Activated CD4-positive, alpha-beta memory T cell treated with anti-CD3 and anti-CD28 coated beads for 36 hours (primary cell): ENCODE measurements at regions of chr2 and their contacts with region 1.

Region 1: DNA sequence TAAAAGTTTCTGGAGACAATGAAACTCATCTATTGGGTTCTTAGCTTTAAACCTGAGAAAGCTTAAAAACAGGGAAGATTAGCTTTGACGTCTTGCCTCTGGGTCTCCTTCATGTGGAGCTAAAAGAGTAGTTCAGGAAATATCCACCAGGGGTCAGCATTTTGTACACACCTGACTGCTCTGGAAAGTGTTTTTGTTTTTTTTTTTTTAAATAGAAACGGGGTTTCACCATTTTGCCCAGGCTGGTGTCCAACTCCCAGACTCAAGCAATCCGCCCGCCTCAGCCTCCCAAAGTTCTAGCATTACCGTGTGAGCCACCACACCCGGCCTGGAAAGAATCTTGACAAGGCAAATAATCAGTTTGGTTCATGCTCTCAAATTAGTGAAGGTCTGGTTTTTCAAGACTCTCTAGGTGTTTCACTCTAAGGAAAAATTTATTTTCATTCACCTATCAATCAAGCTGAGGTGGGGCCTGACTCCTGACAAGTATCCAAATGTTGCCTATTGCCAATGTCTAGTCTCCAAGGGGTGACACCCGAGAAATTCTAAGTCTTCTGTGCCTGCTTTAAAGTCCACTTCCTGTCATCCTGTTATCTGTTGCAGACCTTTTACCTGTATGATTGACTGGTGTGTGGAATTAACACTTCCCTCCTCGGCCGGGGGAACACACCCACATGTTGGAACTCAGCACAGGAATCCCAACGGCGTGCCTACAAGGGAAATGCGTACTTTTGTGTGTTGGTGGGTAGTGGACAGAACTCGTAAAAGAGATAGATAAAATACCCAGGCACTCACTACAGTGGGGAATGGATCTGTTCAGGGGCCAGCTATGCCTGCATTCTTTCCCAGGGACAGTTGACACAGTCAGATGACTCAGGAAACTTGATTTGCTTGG is 11.3 kb downstream of the IL1RN start:
- DNase-seq: peak; percentile 38
- H3K4me3 Mint-ChIP-seq: peak overlapping the region; percentile 23
- H3K27ac Mint-ChIP-seq: peak overlapping the region; percentile 15
- H3K4me1 Mint-ChIP-seq: peaks cover 24% of the 10 kb centered on the region
- H3K27me3 Mint-ChIP-seq: no peaks in the 10 kb centered on the region

Region 2: GRCh38 chr2:112454586-112454985 is 684.1 kb before region 1 on chr2:
- CTCF ChIA-PET with region 1: no interaction called
- POLR2A ChIA-PET with region 1: no interaction called
- intact Hi-C with region 1: no loop called
- DNase-seq: no peak
- H3K4me3 Mint-ChIP-seq: no peak overlapping the region
- H3K27ac Mint-ChIP-seq: no peak overlapping the region
- H3K4me1 Mint-ChIP-seq: no peaks in the 10 kb centered on the region
- H3K27me3 Mint-ChIP-seq: no peaks in the 10 kb centered on the region

Region 3: DNA sequence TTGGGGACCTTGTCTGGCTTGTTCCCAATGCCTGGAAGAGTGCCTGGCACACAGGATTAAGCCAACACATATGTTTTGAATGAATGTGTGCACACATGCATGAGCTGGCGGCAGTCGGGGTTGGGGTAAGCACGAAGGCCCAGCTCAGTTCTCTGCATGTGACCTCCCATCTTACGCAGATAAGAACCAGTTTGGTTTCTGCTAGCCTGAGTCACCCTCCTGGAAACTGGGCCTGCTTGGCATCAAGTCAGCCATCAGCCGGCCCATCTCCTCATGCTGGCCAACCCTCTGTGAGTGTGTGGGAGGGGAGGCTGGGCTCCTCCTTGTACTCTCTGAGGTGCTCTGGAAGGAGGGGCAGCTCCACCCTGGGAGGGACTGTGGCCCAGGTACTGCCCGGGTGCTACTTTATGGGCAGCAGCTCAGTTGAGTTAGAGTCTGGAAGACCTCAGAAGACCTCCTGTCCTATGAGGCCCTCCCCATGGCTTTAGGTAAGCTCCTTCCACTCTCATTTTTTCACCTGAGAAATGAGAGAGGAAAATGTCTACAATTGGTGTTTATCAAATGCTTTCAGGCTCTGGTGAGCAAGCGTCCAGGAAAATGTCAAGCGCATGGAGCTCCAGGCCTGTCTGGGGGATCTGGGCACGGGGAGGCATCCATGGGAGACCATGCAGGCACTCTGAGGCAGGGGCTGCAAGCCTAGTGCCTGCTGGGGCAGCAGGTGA is 21.0 kb before region 1 on chr2:
- CTCF ChIA-PET with region 1: interaction called, 58 read pairs
- POLR2A ChIA-PET with region 1: no interaction called
- intact Hi-C with region 1: loop called (anchors 2 kb)
- DNase-seq: peak; percentile 84
- H3K4me3 Mint-ChIP-seq: peak overlapping the region; percentile 13
- H3K27ac Mint-ChIP-seq: peak overlapping the region; percentile 68
- H3K4me1 Mint-ChIP-seq: peaks cover 23% of the 10 kb centered on the region
- H3K27me3 Mint-ChIP-seq: peaks cover 3% of the 10 kb centered on the region

Region 4: GRCh38 chr2:113157118-113157896 is 18.6 kb after region 1 on chr2:
- CTCF ChIA-PET with region 1: interaction called, 69 read pairs
- POLR2A ChIA-PET with region 1: interaction called, 5 read pairs
- intact Hi-C with region 1: loop called (anchors 2 kb)
- DNase-seq: peak; percentile 66
- H3K4me3 Mint-ChIP-seq: peak overlapping the region; percentile 81
- H3K27ac Mint-ChIP-seq: peak overlapping the region; percentile 79
- H3K4me1 Mint-ChIP-seq: peaks cover 22% of the 10 kb centered on the region
- H3K27me3 Mint-ChIP-seq: no peaks in the 10 kb centered on the region

Region 5: DNA sequence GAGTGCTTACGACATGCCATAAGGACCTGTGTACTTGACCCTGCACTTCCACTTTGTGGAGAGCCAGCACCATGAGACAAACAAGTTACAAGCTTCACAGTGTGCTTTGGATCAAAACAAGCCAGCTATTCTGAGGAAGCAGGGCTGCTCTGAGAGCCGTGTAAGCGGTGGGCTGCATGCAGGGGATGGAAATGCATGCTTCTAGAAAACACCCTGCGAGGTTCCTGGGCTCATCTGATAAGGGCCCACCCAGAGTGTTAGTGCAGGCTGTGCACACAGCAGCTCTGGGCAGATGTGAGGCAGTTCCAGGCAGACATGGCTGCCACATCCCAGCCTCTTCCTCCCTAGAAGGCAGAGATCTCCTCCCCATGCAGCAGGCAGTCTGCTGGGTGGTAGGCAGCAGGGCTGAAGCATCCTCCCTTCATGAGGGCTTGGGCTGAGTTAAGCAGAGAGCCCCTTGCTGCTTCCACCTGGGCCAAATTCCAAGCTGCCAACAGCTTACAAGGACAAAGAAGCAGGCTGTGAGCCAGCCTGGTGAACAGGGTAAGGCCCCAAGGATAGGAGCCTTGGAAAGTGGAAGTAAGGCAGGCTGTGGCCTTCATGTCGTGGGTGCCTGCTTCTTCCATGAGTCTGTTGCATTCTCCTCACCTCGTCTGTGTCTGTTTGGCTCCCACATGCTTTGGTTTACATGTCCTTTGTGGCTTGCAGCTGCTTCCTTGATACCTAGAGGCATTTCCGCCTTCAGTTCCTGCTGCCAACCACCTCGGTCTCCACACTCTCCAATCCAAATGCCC is 42.8 kb after region 1 on chr2:
- CTCF ChIA-PET with region 1: interaction called, 118 read pairs
- POLR2A ChIA-PET with region 1: interaction called, 5 read pairs
- intact Hi-C with region 1: no loop called
- DNase-seq: no peak
- H3K4me3 Mint-ChIP-seq: no peak overlapping the region
- H3K27ac Mint-ChIP-seq: peak overlapping the region; percentile 55
- H3K4me1 Mint-ChIP-seq: peaks cover 95% of the 10 kb centered on the region
- H3K27me3 Mint-ChIP-seq: no peaks in the 10 kb centered on the region

Region 6: DNA sequence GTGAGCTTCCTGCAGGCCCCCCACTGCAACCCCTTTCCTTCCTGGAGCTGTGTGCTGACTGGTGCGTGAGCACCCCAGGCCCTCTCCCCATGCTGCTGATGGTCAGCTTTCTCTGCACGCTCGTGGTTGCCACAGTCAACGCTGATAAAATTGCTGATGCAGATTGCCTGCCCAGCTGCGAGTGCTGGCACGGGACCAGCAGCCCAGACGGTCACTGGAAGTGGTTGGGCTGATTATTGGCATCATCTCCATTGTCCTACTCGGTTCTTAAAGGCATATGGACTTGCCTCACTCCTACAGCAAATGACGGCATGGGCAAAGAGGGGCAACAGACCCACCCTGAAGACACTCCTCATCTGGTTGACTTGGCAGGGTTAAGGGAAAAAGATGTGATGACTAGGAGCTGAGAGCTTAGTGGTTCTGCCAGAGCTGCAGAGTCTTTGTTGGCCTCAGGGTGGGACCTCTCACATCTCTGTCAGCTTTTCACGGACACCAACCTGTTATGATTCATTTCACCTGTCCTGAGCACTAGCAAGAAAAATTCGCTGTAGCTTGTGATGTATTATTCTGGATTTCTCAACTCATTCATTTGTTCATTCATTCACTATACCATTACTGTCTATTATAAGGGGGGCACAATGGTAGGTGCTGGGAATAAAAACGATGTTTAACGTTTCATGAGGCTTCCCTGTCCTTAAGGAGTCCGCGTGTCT is 101.6 kb after region 1 on chr2:
- CTCF ChIA-PET with region 1: interaction called, 5 read pairs
- POLR2A ChIA-PET with region 1: no interaction called
- intact Hi-C with region 1: loop called (anchors 2 kb)
- DNase-seq: no peak
- H3K4me3 Mint-ChIP-seq: no peak overlapping the region
- H3K27ac Mint-ChIP-seq: peak overlapping the region; percentile 88
- H3K4me1 Mint-ChIP-seq: peaks cover 43% of the 10 kb centered on the region
- H3K27me3 Mint-ChIP-seq: no peaks in the 10 kb centered on the region

Region 7: GRCh38 chr2:113282747-113283533 is 144.3 kb after region 1 on chr2:
- CTCF ChIA-PET with region 1: no interaction called
- POLR2A ChIA-PET with region 1: no interaction called
- intact Hi-C with region 1: no loop called
- DNase-seq: no peak
- H3K4me3 Mint-ChIP-seq: no peak overlapping the region
- H3K27ac Mint-ChIP-seq: no peak overlapping the region
- H3K4me1 Mint-ChIP-seq: no peaks in the 10 kb centered on the region
- H3K27me3 Mint-ChIP-seq: peaks cover 5% of the 10 kb centered on the region

Region 8: DNA sequence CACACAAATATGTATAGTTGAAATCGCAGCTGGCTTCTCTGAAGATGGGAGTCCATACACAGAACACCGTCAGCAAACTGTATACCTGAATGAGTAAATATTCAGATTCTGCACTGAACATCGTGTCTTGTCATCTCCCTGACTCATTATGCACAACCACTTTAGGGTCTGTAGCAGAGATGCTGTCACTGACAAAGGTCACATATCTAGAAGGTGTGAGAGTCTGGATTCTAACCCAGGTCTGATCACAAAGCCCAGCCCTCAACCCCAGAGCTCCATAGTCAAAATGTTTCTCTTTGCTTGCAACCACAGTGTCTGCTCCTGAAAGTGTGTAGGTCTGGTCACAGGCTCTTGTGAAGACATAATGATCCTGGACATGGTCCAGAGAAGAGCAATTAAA is 218.4 kb after region 1 on chr2:
- CTCF ChIA-PET with region 1: no interaction called
- POLR2A ChIA-PET with region 1: no interaction called
- intact Hi-C with region 1: no loop called
- DNase-seq: peak; percentile 24
- H3K4me3 Mint-ChIP-seq: no peak overlapping the region
- H3K27ac Mint-ChIP-seq: no peak overlapping the region
- H3K4me1 Mint-ChIP-seq: peaks cover 21% of the 10 kb centered on the region
- H3K27me3 Mint-ChIP-seq: peaks cover 6% of the 10 kb centered on the region

Region 9: GRCh38 chr2:113876503-113877387 is 738.1 kb after region 1 on chr2:
- CTCF ChIA-PET with region 1: no interaction called
- POLR2A ChIA-PET with region 1: no interaction called
- intact Hi-C with region 1: no loop called
- DNase-seq: peak; percentile 93
- H3K4me3 Mint-ChIP-seq: peak overlapping the region; percentile 30
- H3K27ac Mint-ChIP-seq: peak overlapping the region; percentile 84
- H3K4me1 Mint-ChIP-seq: peaks cover 38% of the 10 kb centered on the region
- H3K27me3 Mint-ChIP-seq: no peaks in the 10 kb centered on the region